Caco-2 (cell line): ENCODE measurements at regions of chr18 and their contacts with region 1.

Region 1: GRCh38 chr18:35580701-35581539 is 620 bp upstream of the GALNT1 start:
- DNase-seq: peak; percentile 39 to 44
- H3K4me3 ChIP-seq: peak overlapping the region; percentile 58
- H3K4me3 Mint-ChIP-seq: peak overlapping the region; percentile 68
- H3K27ac Mint-ChIP-seq: no peak overlapping the region
- H3K4me1 ChIP-seq: peaks cover 4% of the 10 kb centered on the region
- H3K4me1 Mint-ChIP-seq: no peaks in the 10 kb centered on the region
- H3K27me3 ChIP-seq: no peaks in the 10 kb centered on the region
- H3K27me3 Mint-ChIP-seq: no peaks in the 10 kb centered on the region
- CTCF ChIP-seq: no peak

Region 2: DNA sequence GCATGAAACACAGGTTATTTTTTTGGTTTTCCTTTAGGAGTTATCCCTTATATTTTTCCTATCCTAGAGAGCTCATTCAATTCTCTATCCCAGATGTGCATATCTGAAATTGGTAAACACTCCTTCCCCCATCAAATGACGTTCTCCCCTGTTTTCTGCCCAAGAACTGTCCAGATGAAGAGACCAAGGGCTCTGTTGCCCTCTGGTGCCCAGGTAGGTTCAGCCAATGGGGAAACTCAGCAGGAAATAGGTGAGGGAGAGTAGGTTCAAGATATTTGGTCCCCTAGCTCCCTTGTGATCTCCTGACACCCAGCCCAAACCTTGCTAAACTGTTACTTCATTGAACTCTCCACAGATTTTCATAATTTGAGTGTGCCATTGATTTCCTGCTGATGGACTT is 69.1 kb before region 1 on chr18:
- CTCF ChIA-PET with region 1: no interaction called
- POLR2A ChIA-PET with region 1: no interaction called
- intact Hi-C with region 1: loop called (anchors 5 kb)
- DNase-seq: no peak
- H3K4me3 ChIP-seq: no peak overlapping the region
- H3K4me3 Mint-ChIP-seq: no peak overlapping the region
- H3K27ac Mint-ChIP-seq: no peak overlapping the region
- H3K4me1 ChIP-seq: peaks cover 19% of the 10 kb centered on the region
- H3K4me1 Mint-ChIP-seq: no peaks in the 10 kb centered on the region
- H3K27me3 ChIP-seq: no peaks in the 10 kb centered on the region
- H3K27me3 Mint-ChIP-seq: no peaks in the 10 kb centered on the region
- CTCF ChIP-seq: peak in 1 of 2 experiments; percentile 9

Region 3: DNA sequence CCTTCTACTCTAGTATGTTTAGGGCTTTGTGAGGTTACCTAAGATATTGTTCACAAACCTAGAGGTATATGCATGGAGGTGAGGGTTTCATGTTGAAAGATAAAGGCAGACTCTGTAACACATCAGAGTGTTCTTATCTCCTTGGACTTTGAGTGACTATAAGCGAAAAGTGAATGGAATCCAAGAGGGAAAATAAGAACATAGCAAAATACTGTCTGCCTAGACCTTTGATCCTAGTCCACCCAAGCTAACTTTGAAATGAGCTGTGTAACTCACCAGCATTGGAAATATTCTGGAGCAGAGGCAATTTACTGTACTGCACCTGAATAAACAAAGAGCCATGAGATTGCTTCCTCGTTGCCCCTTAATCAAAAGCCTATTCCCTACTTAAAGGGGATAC is 27.6 kb before region 1 on chr18:
- CTCF ChIA-PET with region 1: no interaction called
- POLR2A ChIA-PET with region 1: no interaction called
- intact Hi-C with region 1: no loop called
- DNase-seq: peak in 1 of 2 experiments; percentile 14
- H3K4me3 ChIP-seq: no peak overlapping the region
- H3K4me3 Mint-ChIP-seq: no peak overlapping the region
- H3K27ac Mint-ChIP-seq: no peak overlapping the region
- H3K4me1 ChIP-seq: peaks cover 13% of the 10 kb centered on the region
- H3K4me1 Mint-ChIP-seq: peaks cover 8% of the 10 kb centered on the region
- H3K27me3 ChIP-seq: no peaks in the 10 kb centered on the region
- H3K27me3 Mint-ChIP-seq: no peaks in the 10 kb centered on the region
- CTCF ChIP-seq: no peak

Region 4: DNA sequence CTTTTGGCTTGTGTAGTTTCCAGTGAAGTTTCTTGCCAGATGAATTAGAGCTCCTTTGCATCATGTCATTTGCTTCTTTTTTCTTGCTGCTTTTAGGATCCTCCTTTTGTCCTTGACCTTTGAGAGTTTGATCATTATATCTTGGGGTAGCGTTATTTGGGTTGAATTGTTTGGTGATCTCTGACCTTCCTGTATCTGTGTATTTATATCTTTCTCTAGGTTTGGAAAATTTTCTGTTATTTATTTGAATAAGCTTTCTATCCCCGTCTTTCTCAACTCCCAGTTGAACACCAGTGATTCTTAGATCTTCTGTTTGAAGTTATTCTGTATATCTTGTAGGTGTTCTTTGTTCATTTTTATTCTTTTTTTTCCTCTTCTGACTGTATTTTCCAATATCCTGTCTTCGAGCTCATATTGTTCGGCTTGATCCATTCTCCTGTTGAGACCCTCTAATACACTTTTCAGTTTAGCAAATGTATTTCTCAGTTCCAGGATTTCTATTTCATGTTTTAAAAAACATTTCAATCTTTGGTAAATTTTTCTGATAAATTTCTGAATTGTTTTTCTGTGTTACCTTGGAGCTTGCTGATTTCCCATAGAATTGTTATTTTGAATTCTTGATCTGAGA is 21.4 kb after region 1 on chr18:
- CTCF ChIA-PET with region 1: no interaction called
- POLR2A ChIA-PET with region 1: no interaction called
- intact Hi-C with region 1: loop called (anchors 2 kb)
- DNase-seq: no peak
- H3K4me3 ChIP-seq: no peak overlapping the region
- H3K4me3 Mint-ChIP-seq: no peak overlapping the region
- H3K27ac Mint-ChIP-seq: no peak overlapping the region
- H3K4me1 ChIP-seq: no peaks in the 10 kb centered on the region
- H3K4me1 Mint-ChIP-seq: no peaks in the 10 kb centered on the region
- H3K27me3 ChIP-seq: no peaks in the 10 kb centered on the region
- H3K27me3 Mint-ChIP-seq: no peaks in the 10 kb centered on the region
- CTCF ChIP-seq: no peak